Activated CD4-positive, alpha-beta memory T cell treated with anti-CD3 and anti-CD28 coated beads, Interleukin-2, amount 10 ng/mL, durations not matched to agents 7 days and 5 days (primary cell): ENCODE measurements at regions of chr5 and their contacts with region 1.

Region 1: GRCh38 chr5:151115274-151115905 is 34.6 kb upstream of the TNIP1 start:
- DNase-seq: peak; percentile 71
- H3K4me3 Mint-ChIP-seq: no peak overlapping the region
- H3K27ac Mint-ChIP-seq: no peak overlapping the region
- H3K4me1 Mint-ChIP-seq: peaks cover 2% of the 10 kb centered on the region
- H3K27me3 Mint-ChIP-seq: no peaks in the 10 kb centered on the region

Region 2: DNA sequence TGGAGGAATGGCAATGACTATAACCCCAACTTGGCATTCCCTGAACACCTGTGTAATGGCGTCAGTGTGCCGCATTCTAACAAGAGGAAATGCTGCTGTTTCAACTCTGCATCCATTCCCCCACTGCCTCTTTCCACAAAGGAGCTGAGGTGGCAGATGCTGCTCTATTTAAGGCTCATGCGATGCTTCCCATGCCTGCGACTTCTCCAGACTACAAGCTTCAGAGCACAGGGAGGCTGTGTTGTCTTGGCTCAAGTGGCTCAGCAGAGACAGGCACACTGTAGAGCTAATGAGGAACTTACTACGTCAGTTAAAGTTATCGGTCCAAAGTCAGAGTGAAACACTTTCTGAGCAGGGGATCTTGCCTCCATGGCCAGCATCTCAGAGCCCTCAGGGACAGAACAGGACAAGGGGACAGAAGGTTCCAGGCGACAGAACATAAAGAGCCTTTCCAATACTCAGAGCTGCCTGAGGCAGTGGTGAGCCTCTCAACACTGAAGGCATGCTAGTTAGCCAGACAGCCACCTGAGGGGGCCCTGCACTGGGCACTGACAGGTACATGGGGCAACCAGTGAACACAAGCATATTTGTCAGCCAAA is 56.4 kb before region 1 on chr5:
- CTCF ChIA-PET with region 1: interaction called, 30 read pairs
- POLR2A ChIA-PET with region 1: interaction called, 3 read pairs
- DNase-seq: no peak
- H3K4me3 Mint-ChIP-seq: no peak overlapping the region
- H3K27ac Mint-ChIP-seq: peak overlapping the region; percentile 80
- H3K4me1 Mint-ChIP-seq: peaks cover 35% of the 10 kb centered on the region
- H3K27me3 Mint-ChIP-seq: no peaks in the 10 kb centered on the region

Region 3: DNA sequence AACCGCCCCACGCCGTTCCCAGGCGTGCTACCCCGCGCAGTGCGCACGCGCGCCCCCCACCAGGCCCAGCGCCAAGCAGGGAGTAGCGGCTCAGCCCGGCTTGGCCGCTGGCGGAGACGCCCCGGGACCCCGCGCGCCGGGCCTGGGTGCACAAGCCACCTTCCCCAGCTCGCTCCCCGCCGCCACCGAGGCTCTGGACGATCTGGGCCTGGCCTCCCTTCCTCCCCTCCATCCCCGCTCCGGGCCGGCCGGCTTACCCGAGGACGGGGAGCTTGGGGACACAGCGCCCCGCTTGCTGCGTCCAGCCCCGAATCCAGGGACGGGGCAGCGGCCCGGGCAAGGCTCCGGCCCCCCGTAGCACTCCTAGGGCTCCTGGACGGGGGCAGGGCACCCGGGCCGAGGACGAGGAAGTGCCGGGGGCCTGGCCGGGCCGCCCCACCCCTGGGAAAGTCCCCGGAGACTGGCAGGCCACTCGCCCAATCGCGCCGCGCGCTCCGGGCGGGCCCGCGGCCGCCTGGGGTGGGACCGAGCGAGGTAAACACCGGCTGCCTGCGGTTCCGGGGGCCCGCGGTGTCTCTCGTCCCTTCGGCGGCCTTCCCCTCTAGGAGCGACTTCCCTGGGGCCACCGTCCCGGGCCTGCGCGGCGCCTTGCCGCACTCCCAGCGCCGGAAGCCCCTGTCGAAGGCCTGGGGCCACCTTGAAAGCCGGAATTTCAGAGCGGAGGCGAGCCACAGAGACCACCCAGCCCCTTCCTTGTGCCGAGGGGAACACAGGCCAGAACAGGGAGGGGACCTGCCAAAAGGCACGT is 34.6 kb before region 1 on chr5 and contains the start of gene TNIP1:
- CTCF ChIA-PET with region 1: interaction called, 17 read pairs
- POLR2A ChIA-PET with region 1: interaction called, 4 read pairs
- DNase-seq: peak; percentile 94
- H3K4me3 Mint-ChIP-seq: peak within 1 kb of the TSS; percentile 88
- H3K27ac Mint-ChIP-seq: peak within 1 kb of the TSS; percentile 86
- H3K4me1 Mint-ChIP-seq: peaks cover 83% of the 10 kb centered on the region
- H3K27me3 Mint-ChIP-seq: no peaks in the 10 kb centered on the region
- total RNA-seq, gene TNIP1: 188 to 201 TPM

Region 4: DNA sequence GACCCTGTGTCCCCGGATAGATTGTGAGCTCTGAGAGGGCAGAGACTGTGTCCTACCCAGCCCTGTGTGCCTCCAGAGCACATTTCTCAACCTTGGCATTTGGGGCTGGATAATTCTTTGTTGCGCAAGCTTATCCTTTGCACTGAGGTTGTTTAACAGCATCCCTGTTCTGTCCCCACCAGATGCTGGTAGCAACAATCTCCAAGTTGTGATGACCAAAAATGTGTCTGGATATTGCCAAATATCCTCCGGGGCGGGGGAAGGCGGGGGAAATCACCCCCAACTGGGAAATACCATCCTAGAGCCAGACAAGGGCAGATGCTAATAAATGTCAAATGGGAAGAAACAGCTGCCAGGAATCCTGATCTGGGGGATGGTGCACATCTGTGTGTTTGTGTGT is 10.6 kb before region 1 on chr5:
- CTCF ChIA-PET with region 1: interaction called, 17 read pairs
- POLR2A ChIA-PET with region 1: interaction called, 5 read pairs
- DNase-seq: no peak
- H3K4me3 Mint-ChIP-seq: no peak overlapping the region
- H3K27ac Mint-ChIP-seq: no peak overlapping the region
- H3K4me1 Mint-ChIP-seq: peaks cover 14% of the 10 kb centered on the region
- H3K27me3 Mint-ChIP-seq: no peaks in the 10 kb centered on the region

Region 5: GRCh38 chr5:151150471-151151262 is 35.3 kb after region 1 on chr5:
- CTCF ChIA-PET with region 1: interaction called, 22 read pairs
- POLR2A ChIA-PET with region 1: interaction called, 4 read pairs
- DNase-seq: peak; percentile 83
- H3K4me3 Mint-ChIP-seq: peak overlapping the region; percentile 50
- H3K27ac Mint-ChIP-seq: peak overlapping the region; percentile 96
- H3K4me1 Mint-ChIP-seq: peaks cover 95% of the 10 kb centered on the region
- H3K27me3 Mint-ChIP-seq: no peaks in the 10 kb centered on the region

Region 6: DNA sequence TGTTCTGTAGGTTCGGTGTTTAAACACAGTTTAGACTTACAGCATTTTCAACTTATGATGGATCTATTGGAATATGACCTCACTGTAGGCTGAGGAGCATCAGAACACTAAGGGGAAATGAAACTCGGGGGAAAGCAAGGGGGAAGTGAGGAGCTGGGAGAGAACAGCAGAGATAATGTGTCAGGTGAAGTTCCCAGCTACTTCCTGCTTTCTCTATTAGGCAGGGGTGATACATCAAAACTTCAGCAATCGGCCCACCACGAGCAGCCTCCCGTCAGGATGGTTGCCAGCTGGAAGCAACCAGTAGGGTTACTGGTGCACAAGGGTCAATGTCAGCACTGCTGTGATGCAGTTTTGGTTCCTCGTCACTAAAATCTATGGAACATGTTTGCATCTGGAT is 441.4 kb after region 1 on chr5:
- CTCF ChIA-PET with region 1: no interaction called
- POLR2A ChIA-PET with region 1: no interaction called
- DNase-seq: no peak
- H3K4me3 Mint-ChIP-seq: no peak overlapping the region
- H3K27ac Mint-ChIP-seq: no peak overlapping the region
- H3K4me1 Mint-ChIP-seq: no peaks in the 10 kb centered on the region
- H3K27me3 Mint-ChIP-seq: peaks cover 2% of the 10 kb centered on the region